ENCODE measurements at regions of chr1 and their contacts with region 1.

Region 1: GRCh38 chr1:200669314-200670241 is at the start of gene DDX59:
- DNase-seq: peak; percentile 95
- H3K4me3 Mint-ChIP-seq: peak within 1 kb of the TSS; percentile 92
- H3K27ac Mint-ChIP-seq: peak within 1 kb of the TSS; percentile 95
- H3K4me1 Mint-ChIP-seq: peaks cover 36% of the 10 kb centered on the region
- H3K27me3 Mint-ChIP-seq: no peaks in the 10 kb centered on the region
- total RNA-seq, gene DDX59: 19.4 to 23.4 TPM

Region 2: GRCh38 chr1:200681231-200681630 is 11.7 kb after region 1 on chr1:
- CTCF ChIA-PET with region 1: no interaction called
- POLR2A ChIA-PET with region 1: interaction called, 15 read pairs
- intact Hi-C with region 1: no loop called
- DNase-seq: no peak
- H3K4me3 Mint-ChIP-seq: no peak overlapping the region
- H3K27ac Mint-ChIP-seq: no peak overlapping the region
- H3K4me1 Mint-ChIP-seq: no peaks in the 10 kb centered on the region
- H3K27me3 Mint-ChIP-seq: no peaks in the 10 kb centered on the region

Region 3: GRCh38 chr1:200738740-200739498 is 69.3 kb after region 1 on chr1 and contains the start of gene CAMSAP2:
- CTCF ChIA-PET with region 1: no interaction called
- POLR2A ChIA-PET with region 1: interaction called, 8 read pairs
- intact Hi-C with region 1: loop called (anchors 2 kb)
- DNase-seq: peak; percentile 73
- H3K4me3 Mint-ChIP-seq: peak within 1 kb of the TSS; percentile 96
- H3K27ac Mint-ChIP-seq: peak within 1 kb of the TSS; percentile 88
- H3K4me1 Mint-ChIP-seq: peaks cover 34% of the 10 kb centered on the region
- H3K27me3 Mint-ChIP-seq: peaks cover 3% of the 10 kb centered on the region
- total RNA-seq, gene CAMSAP2: 3.0 to 4.1 TPM

Region 4: GRCh38 chr1:200802865-200803512 is 133.4 kb after region 1 on chr1:
- CTCF ChIA-PET with region 1: interaction called, 3 read pairs
- POLR2A ChIA-PET with region 1: no interaction called
- intact Hi-C with region 1: loop called (anchors 5 kb)
- DNase-seq: peak; percentile 83
- H3K4me3 Mint-ChIP-seq: no peak overlapping the region
- H3K27ac Mint-ChIP-seq: no peak overlapping the region
- H3K4me1 Mint-ChIP-seq: no peaks in the 10 kb centered on the region
- H3K27me3 Mint-ChIP-seq: no peaks in the 10 kb centered on the region

Region 5: DNA sequence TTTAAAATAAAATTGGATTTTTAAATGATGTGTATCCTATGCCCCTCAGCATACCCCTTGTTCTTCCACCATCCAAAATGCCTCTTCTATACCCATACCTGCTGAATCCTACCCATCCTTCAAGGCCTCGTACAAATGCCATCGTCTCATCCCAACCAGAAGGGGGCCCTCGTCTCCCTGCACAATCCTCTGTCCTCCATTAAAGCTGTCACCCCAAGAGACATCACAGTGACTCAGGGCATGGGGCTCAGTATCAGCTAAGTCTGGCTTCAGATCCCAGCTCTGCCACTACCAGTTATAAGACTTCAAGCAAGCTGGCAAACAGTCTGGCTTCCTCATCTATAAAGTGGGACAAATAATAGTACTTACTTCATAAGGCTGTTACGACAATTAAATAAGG is 544.9 kb after region 1 on chr1:
- CTCF ChIA-PET with region 1: no interaction called
- POLR2A ChIA-PET with region 1: no interaction called
- intact Hi-C with region 1: no loop called
- DNase-seq: no peak
- H3K4me3 Mint-ChIP-seq: no peak overlapping the region
- H3K27ac Mint-ChIP-seq: no peak overlapping the region
- H3K4me1 Mint-ChIP-seq: no peaks in the 10 kb centered on the region
- H3K27me3 Mint-ChIP-seq: peaks cover 12% of the 10 kb centered on the region

Measured in activated CD4-positive, alpha-beta memory T cell treated with anti-CD3 and anti-CD28 coated beads for 36 hours (primary cell).